MCF 10A (cell line): ENCODE measurements at regions of chr16 and their contacts with region 1.

Region 1: DNA sequence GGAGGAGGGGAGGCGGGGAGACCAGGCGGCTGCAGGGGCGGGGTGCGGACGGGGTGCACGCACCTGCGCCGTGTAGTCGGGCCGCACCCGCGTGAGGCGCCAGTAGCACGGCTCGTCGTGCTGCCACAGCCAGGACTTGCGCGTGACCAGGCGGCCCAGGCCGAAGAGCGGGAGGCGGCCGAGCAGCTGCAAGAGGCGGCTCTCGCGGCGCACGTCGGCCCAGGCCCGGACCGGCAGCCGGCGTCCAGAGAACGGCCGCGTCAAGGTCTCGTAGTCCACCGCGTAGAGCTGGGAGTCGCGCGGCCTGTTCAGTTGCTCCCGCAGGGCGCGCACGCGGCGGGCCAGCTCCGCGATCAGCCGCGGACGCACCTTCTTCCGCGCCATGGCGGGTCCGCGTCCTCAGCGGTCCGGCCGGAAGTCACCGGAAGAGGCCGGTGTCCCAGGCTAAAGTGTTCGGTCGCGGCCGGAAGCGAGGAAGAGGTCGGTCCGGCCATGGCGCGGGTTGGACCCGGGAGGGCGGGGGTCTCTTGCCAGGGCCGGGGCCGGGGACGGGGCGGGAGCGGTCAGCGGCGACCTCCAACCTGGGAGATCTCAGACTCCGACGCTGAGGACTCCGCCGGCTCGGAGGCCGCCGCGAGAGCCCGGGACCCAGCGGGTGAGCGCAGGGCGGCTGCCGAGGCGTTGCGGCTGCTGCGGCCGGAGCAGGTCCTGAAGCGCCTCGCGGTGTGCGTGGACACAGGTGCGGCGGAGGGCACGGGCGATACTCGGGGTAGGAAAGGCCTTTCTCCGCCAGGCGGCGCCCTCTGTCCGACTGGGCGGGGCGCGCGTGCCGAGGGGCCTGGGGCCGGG is at the starts of genes EME2 and MRPS34:
- DNase-seq: peak; percentile 84
- H3K4me3 Mint-ChIP-seq: peak within 1 kb of the TSS; percentile 80
- H3K27ac Mint-ChIP-seq: peak within 1 kb of the TSS; percentile 80
- H3K4me1 Mint-ChIP-seq: peaks cover 7% of the 10 kb centered on the region
- H3K27me3 Mint-ChIP-seq: no peaks in the 10 kb centered on the region
- CTCF ChIP-seq: peak; percentile 92
- total RNA-seq, gene EME2: 20.6 TPM in 2 replicates
- total RNA-seq, gene MRPS34: 82.2 and 102 TPM in 2 replicates

Region 2: GRCh38 chr16:1691276-1691675 is 81.7 kb before region 1 on chr16:
- CTCF ChIA-PET with region 1: no interaction called
- POLR2A ChIA-PET with region 1: interaction called, 18 read pairs
- intact Hi-C with region 1: no loop called
- DNase-seq: peak; percentile 48
- H3K4me3 Mint-ChIP-seq: peak overlapping the region; percentile 62
- H3K27ac Mint-ChIP-seq: peak overlapping the region; percentile 97
- H3K4me1 Mint-ChIP-seq: peaks cover 51% of the 10 kb centered on the region
- H3K27me3 Mint-ChIP-seq: no peaks in the 10 kb centered on the region
- CTCF ChIP-seq: peak; percentile 33

Region 3: DNA sequence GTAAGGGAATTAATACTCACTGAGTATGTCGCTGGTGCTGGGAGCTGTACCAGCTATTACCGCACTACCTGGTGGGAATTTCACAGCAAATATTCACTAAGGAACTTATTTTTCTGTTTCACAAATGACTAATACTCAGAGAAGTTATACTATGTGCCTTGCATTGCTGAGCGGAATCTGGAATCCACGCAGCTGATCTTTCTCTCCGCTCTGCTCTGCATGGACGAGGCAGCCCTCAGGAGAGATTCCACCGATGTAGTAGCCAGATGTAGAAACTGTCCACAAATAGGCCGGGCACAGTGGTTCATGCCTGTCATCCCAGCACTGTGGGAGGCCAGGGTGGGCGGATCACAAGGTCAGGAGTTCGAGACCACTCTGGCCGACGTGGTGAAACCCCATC is 18.8 kb before region 1 on chr16:
- CTCF ChIA-PET with region 1: interaction called, 3 read pairs
- POLR2A ChIA-PET with region 1: interaction called, 26 read pairs
- intact Hi-C with region 1: no loop called
- DNase-seq: no peak
- H3K4me3 Mint-ChIP-seq: no peak overlapping the region
- H3K27ac Mint-ChIP-seq: peak overlapping the region; percentile 64
- H3K4me1 Mint-ChIP-seq: peaks cover 12% of the 10 kb centered on the region
- H3K27me3 Mint-ChIP-seq: no peaks in the 10 kb centered on the region
- CTCF ChIP-seq: no peak